Dorsolateral prefrontal cortex (tissue), 120 donors: ENCODE measurements at regions of chr12 and their contacts with region 1.

Region 1: GRCh38 chr12:34204830-34205285 is 182.6 kb downstream of the ALG10 start:
- DNase-seq: no peak
- H3K4me3 ChIP-seq: no peak overlapping the region
- H3K27ac ChIP-seq: no peak overlapping the region
- H3K27me3 ChIP-seq: peaks cover 0 to 6% (median 0%) of the 10 kb centered on the region in 45 donors
- CTCF ChIP-seq: no peak

Region 2: GRCh38 chr12:34264132-34264531 is 59.3 kb after region 1 on chr12:
- intact Hi-C with region 1: loop called in 1 of 2 experiments (anchors 10 kb)
- DNase-seq: no peak
- H3K4me3 ChIP-seq: no peak overlapping the region
- H3K27ac ChIP-seq: no peak overlapping the region
- H3K27me3 ChIP-seq: peaks cover 0 to 4% (median 0%) of the 10 kb centered on the region in 45 donors
- CTCF ChIP-seq: no peak